ENCODE measurements at regions of chr7 and their contacts with region 1.

Region 1: DNA sequence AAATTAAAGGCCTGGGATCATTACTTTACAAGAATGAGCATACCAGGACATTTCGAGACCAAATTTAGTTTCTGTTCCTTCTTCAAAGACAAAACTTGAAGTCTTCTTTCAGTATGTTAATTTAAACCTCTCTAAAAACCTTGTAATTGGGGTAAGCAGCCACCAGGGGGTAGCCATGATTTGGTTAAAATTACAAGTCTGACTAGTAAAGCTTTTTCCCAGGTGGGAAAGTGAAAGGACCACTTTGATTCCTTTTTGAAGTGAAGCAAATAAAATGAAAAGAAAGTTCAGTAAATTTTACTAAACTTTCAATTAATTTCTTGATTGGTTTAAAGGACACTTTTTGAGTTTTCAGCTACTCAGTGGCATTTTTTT is 294.3 kb downstream of the BBS9 start:
- DNase-seq: no peak
- ATAC-seq: peak; percentile 71
- H3K4me3 Mint-ChIP-seq: no peak overlapping the region
- H3K27ac Mint-ChIP-seq: no peak overlapping the region
- H3K4me1 Mint-ChIP-seq: peaks cover 28% of the 10 kb centered on the region
- H3K27me3 Mint-ChIP-seq: no peaks in the 10 kb centered on the region
- CTCF ChIP-seq: peak; percentile 50

Region 2: DNA sequence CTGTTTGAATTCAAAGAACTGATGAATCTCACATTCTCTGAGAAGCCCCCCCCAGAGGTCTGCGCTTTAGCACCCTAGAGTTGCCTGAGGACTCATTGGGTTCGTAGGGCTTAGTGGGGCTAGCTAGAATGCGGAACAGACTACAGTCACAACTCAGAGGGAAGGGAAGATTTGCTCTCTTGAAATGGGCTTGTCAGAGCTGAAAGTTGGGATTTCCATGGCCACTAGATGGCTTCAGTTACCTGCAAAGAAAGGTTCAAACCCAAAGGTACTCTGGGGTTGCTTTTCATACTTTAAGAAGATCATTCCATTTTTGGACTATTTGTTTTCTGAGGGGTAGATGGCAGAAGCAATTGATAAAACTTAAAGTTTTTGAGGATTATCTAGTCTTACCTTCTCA is 89.3 kb before region 1 on chr7:
- CTCF ChIA-PET with region 1: no interaction called
- POLR2A ChIA-PET with region 1: no interaction called
- intact Hi-C with region 1: no loop called
- DNase-seq: no peak
- ATAC-seq: no peak
- H3K4me3 Mint-ChIP-seq: no peak overlapping the region
- H3K27ac Mint-ChIP-seq: no peak overlapping the region
- H3K4me1 Mint-ChIP-seq: no peaks in the 10 kb centered on the region
- H3K27me3 Mint-ChIP-seq: no peaks in the 10 kb centered on the region
- CTCF ChIP-seq: no peak

Region 3: DNA sequence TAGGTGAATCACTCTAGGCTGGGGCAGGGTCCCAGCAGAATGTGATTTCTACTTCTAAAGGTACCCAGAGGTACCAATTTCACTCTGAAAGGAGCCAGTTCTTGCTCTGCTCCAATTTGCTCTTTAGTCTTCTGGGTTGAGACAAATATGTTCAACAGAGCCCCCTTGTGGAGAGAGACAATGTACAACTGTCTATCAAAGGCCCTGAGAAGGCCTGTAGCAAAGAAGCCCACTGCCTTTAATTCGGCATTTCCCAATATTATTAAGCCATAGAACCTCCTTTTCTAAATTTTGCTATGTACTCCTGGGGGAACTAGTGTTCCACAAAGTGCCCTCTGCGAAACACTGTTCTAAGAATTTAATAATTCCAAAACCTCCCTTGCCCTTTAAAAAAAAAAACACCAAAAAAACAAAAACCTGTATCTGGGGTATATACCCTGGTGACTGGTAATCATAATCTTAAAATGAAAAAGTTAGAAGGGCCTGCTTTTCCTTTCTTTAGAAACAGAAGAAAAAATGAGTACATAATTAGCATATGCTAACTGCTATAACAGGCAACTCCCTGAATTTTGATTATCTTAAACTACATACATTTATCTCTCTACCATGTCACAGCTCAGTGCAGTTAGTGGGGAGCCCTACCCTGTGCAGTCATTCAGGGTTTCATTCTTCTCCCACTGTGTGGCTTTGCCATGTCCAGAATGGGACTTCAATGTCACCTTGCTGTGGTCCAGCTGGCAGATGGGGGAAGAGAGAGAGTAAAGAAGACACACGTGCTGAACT is 320.9 kb after region 1 on chr7:
- CTCF ChIA-PET with region 1: no interaction called
- POLR2A ChIA-PET with region 1: no interaction called
- intact Hi-C with region 1: loop called (anchors 2 kb)
- DNase-seq: no peak
- ATAC-seq: no peak
- H3K4me3 Mint-ChIP-seq: no peak overlapping the region
- H3K27ac Mint-ChIP-seq: no peak overlapping the region
- H3K4me1 Mint-ChIP-seq: no peaks in the 10 kb centered on the region
- H3K27me3 Mint-ChIP-seq: no peaks in the 10 kb centered on the region
- CTCF ChIP-seq: no peak

Region 4: DNA sequence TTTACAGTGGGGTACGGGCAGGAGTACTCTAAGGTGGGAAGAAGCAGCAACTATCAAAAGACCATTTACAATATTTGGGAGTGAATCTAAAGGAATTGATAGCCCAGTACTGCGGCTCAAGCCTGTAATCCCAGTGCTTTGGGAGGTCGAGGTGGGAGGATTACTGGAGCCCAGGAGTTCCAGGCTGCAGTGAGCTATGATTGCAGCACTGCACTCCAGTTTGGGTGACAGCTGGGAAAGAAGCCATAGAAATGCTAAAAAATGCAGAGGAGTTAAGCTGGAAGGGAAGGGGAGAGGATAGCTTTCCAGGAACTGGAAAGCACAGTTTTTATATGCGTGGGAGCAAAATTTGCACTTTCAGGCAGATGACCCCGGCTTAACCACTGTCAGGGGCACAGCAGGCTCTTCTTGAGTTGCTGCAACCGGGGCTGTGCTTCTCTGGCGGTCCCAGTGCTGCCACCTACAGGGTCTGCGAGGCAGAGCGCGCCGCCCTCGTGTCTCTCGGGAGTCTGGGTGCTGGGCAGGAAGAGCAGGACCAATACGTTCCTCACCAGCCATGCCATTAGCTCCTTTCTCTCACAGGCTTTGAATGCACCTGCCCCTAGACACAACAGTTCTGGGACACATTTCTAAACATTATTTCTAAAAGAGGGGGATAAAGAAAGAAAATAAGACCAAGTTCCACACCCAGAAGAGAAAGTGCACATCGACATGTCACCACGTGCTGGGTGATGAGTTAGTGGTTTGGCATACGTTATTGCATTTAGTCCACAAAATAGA is 471.6 kb after region 1 on chr7:
- CTCF ChIA-PET with region 1: interaction called, 13 read pairs
- POLR2A ChIA-PET with region 1: no interaction called
- intact Hi-C with region 1: loop called (anchors 1 kb)
- DNase-seq: peak; percentile 51
- ATAC-seq: peak; percentile 82
- H3K4me3 Mint-ChIP-seq: no peak overlapping the region
- H3K27ac Mint-ChIP-seq: no peak overlapping the region
- H3K4me1 Mint-ChIP-seq: peaks cover 3% of the 10 kb centered on the region
- H3K27me3 Mint-ChIP-seq: peaks cover 45% of the 10 kb centered on the region
- CTCF ChIP-seq: no peak

Region 5: DNA sequence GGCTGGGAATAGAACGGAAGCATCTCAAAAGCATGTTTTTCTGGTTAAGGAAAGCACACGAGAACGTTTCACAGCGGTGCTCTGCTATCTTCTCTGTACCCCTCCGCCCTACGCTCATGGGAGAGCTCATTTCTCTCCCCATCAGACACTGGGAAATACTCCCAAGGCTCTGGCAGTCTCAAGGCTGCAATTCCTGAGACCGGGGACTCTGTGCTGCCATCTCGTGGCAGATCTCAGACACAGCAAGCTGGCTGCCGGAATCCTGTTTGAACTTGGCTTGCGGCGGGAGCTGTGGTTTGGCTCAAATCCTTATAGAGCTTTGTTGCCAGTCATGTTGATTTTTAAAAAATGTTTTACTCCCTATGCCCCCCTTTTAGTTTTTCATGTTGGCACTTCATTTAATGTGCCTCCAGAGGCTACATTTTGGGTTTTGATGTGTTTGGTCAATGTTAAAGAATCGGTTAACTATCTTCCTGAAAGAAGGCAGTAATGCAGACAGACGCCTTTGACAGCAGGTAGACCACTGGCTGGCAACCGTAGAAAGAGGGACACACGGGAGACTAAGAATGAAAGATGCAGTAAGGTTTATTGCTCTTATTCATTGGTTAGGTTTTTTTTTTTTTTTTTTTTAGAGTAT is 509.3 kb after region 1 on chr7:
- CTCF ChIA-PET with region 1: interaction called, 33 read pairs
- POLR2A ChIA-PET with region 1: no interaction called
- intact Hi-C with region 1: loop called (anchors 1 kb)
- DNase-seq: peak; percentile 37
- ATAC-seq: peak; percentile 42
- H3K4me3 Mint-ChIP-seq: no peak overlapping the region
- H3K27ac Mint-ChIP-seq: no peak overlapping the region
- H3K4me1 Mint-ChIP-seq: no peaks in the 10 kb centered on the region
- H3K27me3 Mint-ChIP-seq: peaks cover 8% of the 10 kb centered on the region
- CTCF ChIP-seq: peak; percentile 36